ENCODE measurements at regions of chr3 and their contacts with region 1.

Region 1: GRCh38 chr3:18389108-18389733 is 35.9 kb downstream of the SATB1 start:
- DNase-seq: peak in 5 of 9 experiments; percentile 31 to 70 (median 38)
- ATAC-seq: peak; percentile 58
- H3K4me3 ChIP-seq: no peak overlapping the region
- H3K4me3 Mint-ChIP-seq: no peak overlapping the region
- H3K27ac ChIP-seq: no peak overlapping the region
- H3K27ac Mint-ChIP-seq: peak overlapping the region; percentile 57
- H3K4me1 ChIP-seq: peaks cover 68% of the 10 kb centered on the region
- H3K4me1 Mint-ChIP-seq: peaks cover 83% of the 10 kb centered on the region
- H3K27me3 ChIP-seq: no peaks in the 10 kb centered on the region
- H3K27me3 Mint-ChIP-seq: no peaks in the 10 kb centered on the region
- CTCF ChIP-seq: peak; percentile 91

Region 2: DNA sequence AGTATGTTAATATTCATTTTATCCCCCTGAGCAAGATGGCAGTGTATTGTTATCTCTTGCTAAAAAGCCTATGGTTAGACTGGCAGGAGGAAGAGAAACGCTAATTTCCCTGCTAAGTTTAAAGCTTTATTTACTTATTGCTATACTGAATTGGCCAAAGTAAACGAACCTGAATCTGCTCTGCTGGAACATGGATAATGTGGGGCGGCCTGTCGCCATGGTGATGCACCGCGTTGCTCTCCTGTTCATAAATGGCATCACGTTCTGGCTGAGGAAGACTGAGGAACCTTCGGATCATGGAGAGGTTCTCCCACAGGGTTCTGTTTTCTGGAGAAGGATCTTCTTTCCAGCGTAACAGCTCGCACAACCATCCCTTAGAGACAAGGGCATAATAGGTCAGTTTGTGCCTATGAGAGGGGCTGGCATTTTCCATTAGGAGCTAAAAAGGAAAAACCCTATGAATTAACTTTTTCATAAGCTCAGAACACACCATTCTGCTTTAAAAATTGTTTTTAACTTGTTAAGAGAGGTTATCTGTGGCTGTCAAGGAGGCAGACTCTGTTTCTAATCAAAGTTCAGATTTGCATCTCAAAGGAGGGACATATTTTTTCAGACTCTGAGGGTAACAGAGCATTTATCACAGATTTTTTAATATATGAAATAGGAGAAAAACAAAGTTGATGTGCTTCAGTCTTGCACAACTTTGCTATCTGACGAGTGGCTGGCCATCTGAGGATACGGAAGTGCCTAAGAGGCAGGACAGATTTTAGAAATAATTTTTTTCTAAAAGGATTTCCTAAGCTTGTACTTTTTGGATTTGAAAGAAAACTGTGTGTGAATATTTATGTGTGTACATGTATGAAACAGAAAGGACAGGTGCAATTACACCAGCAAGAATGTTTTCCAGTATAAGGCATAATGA is 37.1 kb before region 1 on chr3:
- CTCF ChIA-PET with region 1: no interaction called
- POLR2A ChIA-PET with region 1: interaction called, 5 read pairs
- intact Hi-C with region 1: loop called in 1 of 2 experiments (anchors 5 kb)
- DNase-seq: no peak
- ATAC-seq: no peak
- H3K4me3 ChIP-seq: no peak overlapping the region
- H3K4me3 Mint-ChIP-seq: no peak overlapping the region
- H3K27ac ChIP-seq: no peak overlapping the region
- H3K27ac Mint-ChIP-seq: peak overlapping the region; percentile 86
- H3K4me1 ChIP-seq: peaks cover 12% of the 10 kb centered on the region
- H3K4me1 Mint-ChIP-seq: peaks cover 55% of the 10 kb centered on the region
- H3K27me3 ChIP-seq: no peaks in the 10 kb centered on the region
- H3K27me3 Mint-ChIP-seq: no peaks in the 10 kb centered on the region
- CTCF ChIP-seq: no peak

Region 3: GRCh38 chr3:18369551-18370185 is 19.6 kb before region 1 on chr3:
- CTCF ChIA-PET with region 1: interaction called, 8 read pairs
- POLR2A ChIA-PET with region 1: interaction called, 3 read pairs
- intact Hi-C with region 1: loop called in 1 of 2 experiments (anchors 2 kb)
- DNase-seq: no peak
- ATAC-seq: no peak
- H3K4me3 ChIP-seq: no peak overlapping the region
- H3K4me3 Mint-ChIP-seq: peak overlapping the region; percentile 41
- H3K27ac ChIP-seq: no peak overlapping the region
- H3K27ac Mint-ChIP-seq: peak overlapping the region; percentile 90
- H3K4me1 ChIP-seq: peaks cover 69% of the 10 kb centered on the region
- H3K4me1 Mint-ChIP-seq: peaks cover 91% of the 10 kb centered on the region
- H3K27me3 ChIP-seq: no peaks in the 10 kb centered on the region
- H3K27me3 Mint-ChIP-seq: no peaks in the 10 kb centered on the region
- CTCF ChIP-seq: no peak

Region 4: GRCh38 chr3:18378218-18378617 is 11.0 kb before region 1 on chr3:
- CTCF ChIA-PET with region 1: interaction called, 8 read pairs
- POLR2A ChIA-PET with region 1: interaction called, 3 read pairs
- intact Hi-C with region 1: loop called in 1 of 2 experiments (anchors 2 kb)
- DNase-seq: no peak
- ATAC-seq: no peak
- H3K4me3 ChIP-seq: no peak overlapping the region
- H3K4me3 Mint-ChIP-seq: no peak overlapping the region
- H3K27ac ChIP-seq: no peak overlapping the region
- H3K27ac Mint-ChIP-seq: no peak overlapping the region
- H3K4me1 ChIP-seq: peaks cover 73% of the 10 kb centered on the region
- H3K4me1 Mint-ChIP-seq: peaks cover 83% of the 10 kb centered on the region
- H3K27me3 ChIP-seq: no peaks in the 10 kb centered on the region
- H3K27me3 Mint-ChIP-seq: no peaks in the 10 kb centered on the region
- CTCF ChIP-seq: no peak

Region 5: DNA sequence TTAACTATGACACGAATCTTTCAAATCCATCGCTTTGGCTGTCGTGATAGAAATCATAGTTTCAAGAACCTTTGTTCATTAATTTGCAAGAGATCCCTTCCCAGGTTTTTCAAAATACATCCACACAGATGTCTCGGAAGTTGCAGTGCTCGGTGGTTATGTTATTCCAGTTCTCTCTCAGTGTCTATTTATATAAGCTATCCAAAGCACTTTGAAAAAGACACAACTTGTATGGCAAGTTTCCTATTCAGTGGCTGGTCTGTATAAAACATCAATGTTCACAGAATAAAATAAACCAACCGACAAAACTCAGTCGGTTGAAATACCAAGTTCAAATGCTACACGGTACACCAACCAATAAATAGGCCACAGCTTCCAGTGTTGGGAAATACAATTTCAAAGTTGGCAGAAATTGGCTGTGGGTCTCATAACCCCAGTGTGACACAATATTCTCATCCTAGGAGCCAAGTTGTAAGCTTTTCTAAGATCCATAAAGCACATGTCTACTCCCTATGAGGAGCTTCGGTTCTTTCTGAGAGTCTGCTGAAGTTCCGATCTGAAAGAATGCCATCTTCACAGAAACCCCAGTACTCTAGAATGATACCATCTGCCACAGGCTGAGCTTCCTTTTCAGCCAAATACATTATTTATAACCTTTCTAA is 12.2 kb after region 1 on chr3:
- CTCF ChIA-PET with region 1: interaction called, 11 read pairs
- POLR2A ChIA-PET with region 1: interaction called, 4 read pairs
- intact Hi-C with region 1: loop called in 1 of 2 experiments (anchors 2 kb)
- DNase-seq: no peak
- ATAC-seq: peak; percentile 36
- H3K4me3 ChIP-seq: no peak overlapping the region
- H3K4me3 Mint-ChIP-seq: peak overlapping the region; percentile 70
- H3K27ac ChIP-seq: peak overlapping the region; percentile 23 to 42
- H3K27ac Mint-ChIP-seq: peak overlapping the region; percentile 96
- H3K4me1 ChIP-seq: peaks cover 82% of the 10 kb centered on the region
- H3K4me1 Mint-ChIP-seq: peaks cover 94% of the 10 kb centered on the region
- H3K27me3 ChIP-seq: no peaks in the 10 kb centered on the region
- H3K27me3 Mint-ChIP-seq: no peaks in the 10 kb centered on the region
- CTCF ChIP-seq: no peak

Region 6: DNA sequence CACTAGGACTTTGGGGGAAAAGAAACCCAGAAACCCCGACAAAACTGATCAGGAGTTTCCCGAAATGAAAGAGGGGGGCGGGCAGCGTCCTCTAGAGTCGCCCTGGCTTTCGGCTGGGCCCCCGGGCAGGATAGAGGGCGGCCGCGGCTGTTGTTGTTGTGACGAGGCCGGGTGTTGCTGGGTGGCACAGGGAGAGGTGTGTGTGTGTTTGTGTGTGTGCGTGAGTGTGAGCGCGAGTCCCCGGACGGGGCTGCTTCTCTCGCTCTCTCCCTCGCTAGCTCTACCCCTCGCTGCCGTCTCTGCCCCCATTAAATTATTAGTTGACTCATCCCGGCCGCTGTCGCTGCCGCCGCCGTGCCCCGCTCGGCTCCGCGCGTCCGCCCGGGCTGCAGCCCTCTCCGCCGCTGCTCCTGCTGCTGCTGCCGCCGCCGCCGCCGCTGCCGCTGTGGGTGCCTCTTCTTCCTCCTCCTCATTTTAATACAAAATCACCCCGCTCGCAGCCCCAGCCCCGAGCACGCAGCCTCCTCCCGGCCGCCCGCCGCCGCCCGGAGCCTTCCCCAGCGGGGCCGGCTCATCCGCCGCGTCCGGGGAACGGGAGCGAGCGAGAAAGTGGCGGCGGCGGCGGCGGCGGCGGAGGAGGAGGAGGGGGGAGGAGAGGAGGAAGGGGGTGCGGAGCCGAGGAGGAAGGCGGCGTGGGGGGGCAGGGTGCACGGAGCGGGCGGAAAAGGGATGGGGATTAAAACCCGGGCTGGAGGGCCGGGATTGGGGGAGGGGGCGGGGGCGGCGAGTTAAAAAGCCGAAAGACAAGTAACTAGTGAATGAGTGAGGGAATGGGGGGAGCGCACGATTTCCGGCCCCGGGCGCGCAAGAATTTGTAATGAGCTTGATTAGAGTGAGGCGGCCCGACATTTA is 35.8 kb after region 1 on chr3 and contains the start of gene SATB1:
- CTCF ChIA-PET with region 1: interaction called, 8 read pairs
- POLR2A ChIA-PET with region 1: interaction called, 4 read pairs
- intact Hi-C with region 1: loop called in 1 of 2 experiments (anchors 5 kb)
- DNase-seq: peak; percentile 46 to 83 (median 76)
- ATAC-seq: peak; percentile 42
- H3K4me3 ChIP-seq: peak within 1 kb of the TSS; percentile 82 to 84
- H3K4me3 Mint-ChIP-seq: peak within 1 kb of the TSS; percentile 91
- H3K27ac ChIP-seq: peak within 1 kb of the TSS; percentile 76 to 83
- H3K27ac Mint-ChIP-seq: peak within 1 kb of the TSS; percentile 95
- H3K4me1 ChIP-seq: peaks cover 55% of the 10 kb centered on the region
- H3K4me1 Mint-ChIP-seq: peaks cover 76% of the 10 kb centered on the region
- H3K27me3 ChIP-seq: no peaks in the 10 kb centered on the region
- H3K27me3 Mint-ChIP-seq: no peaks in the 10 kb centered on the region
- CTCF ChIP-seq: no peak
- total RNA-seq, gene SATB1: 333 to 346 TPM

Region 7: DNA sequence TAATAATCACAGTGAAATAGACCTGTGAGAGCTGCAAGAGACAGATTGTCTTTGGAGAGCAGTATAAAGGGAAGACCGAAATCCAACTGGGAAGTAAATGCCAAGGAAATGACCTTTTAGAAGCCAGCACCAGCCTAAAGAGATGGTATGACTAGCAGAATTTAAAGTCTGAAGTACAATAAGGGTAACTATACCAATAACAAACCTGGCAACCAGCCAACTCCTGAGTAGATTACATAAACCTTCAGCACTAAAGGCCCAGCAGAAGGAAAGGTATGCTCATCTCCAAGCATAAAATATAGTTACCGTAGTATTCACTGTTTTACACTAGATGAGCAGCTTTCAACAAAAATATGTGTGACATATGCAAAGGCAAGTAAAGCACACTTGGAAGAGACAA is 191.0 kb after region 1 on chr3:
- CTCF ChIA-PET with region 1: no interaction called
- POLR2A ChIA-PET with region 1: no interaction called
- intact Hi-C with region 1: no loop called
- DNase-seq: peak in 2 of 9 experiments; percentile 17 to 32
- ATAC-seq: no peak
- H3K4me3 ChIP-seq: no peak overlapping the region
- H3K4me3 Mint-ChIP-seq: no peak overlapping the region
- H3K27ac ChIP-seq: no peak overlapping the region
- H3K27ac Mint-ChIP-seq: no peak overlapping the region
- H3K4me1 ChIP-seq: no peaks in the 10 kb centered on the region
- H3K4me1 Mint-ChIP-seq: peaks cover 18% of the 10 kb centered on the region
- H3K27me3 ChIP-seq: no peaks in the 10 kb centered on the region
- H3K27me3 Mint-ChIP-seq: no peaks in the 10 kb centered on the region
- CTCF ChIP-seq: no peak

Region 8: DNA sequence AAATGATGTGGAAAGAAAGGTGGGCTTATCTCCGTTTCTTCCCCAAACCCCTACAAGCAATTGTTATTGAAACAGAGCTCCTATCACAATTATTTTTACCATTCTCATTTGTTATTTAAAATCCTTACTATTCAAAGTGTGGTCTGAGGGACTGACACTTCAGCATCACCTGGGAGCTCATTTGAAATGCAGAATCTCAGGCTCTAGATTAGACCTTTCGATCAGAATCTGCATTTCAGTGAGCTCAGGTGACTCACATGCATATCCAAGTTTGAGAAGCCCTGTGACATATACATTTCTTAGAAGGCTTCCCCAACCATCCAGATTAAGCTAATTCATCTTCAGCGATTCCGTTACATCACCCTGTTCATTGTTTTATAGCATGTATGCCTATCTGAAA is 904.1 kb after region 1 on chr3:
- CTCF ChIA-PET with region 1: no interaction called
- POLR2A ChIA-PET with region 1: no interaction called
- intact Hi-C with region 1: no loop called
- DNase-seq: no peak
- ATAC-seq: no peak
- H3K4me3 ChIP-seq: no peak overlapping the region
- H3K4me3 Mint-ChIP-seq: no peak overlapping the region
- H3K27ac ChIP-seq: no peak overlapping the region
- H3K27ac Mint-ChIP-seq: no peak overlapping the region
- H3K4me1 ChIP-seq: no peaks in the 10 kb centered on the region
- H3K4me1 Mint-ChIP-seq: no peaks in the 10 kb centered on the region
- H3K27me3 ChIP-seq: no peaks in the 10 kb centered on the region
- H3K27me3 Mint-ChIP-seq: no peaks in the 10 kb centered on the region
- CTCF ChIP-seq: no peak